Calu3 (cell line): ENCODE measurements at regions of chr1 and their contacts with region 1.

Region 1: GRCh38 chr1:16055613-16056520 is 12.3 kb downstream of the CLCNKB start:
- DNase-seq: peak; percentile 88
- H3K4me3 Mint-ChIP-seq: no peak overlapping the region
- H3K27ac Mint-ChIP-seq: no peak overlapping the region
- H3K4me1 Mint-ChIP-seq: no peaks in the 10 kb centered on the region
- H3K27me3 Mint-ChIP-seq: peaks cover 18% of the 10 kb centered on the region
- CTCF ChIP-seq: no peak

Region 2: DNA sequence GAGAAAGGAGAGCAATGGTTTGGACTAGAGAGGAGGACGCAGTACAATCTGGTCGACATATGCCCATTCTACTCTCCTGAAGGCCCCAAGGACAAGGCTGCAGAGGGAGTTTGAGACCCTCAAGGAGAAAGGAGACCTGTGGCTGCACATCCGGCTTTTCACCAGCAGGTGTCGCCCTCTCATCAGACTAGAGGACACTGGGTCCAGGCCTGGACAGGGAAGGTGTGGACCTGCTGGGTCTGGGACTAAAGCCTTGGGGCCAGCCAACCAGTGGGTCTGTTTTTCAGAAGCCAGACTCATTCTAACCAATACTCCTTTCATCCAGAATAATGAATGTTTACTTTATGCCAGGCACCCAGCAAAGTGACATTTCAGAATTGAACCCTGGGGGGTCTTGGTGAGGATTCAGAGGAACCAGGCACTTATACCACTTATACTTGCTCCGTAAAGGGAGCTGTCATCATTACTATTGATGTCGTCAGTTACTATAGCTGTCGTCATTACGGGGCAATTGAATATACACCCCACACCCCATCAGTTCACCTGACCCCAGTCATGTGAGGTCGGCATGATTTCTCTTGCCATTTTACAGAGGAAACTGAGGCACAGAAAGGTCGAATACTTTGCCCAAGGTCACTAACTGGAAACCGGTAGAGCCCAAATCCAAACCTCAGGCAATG is 46.7 kb before region 1 on chr1:
- CTCF ChIA-PET with region 1: no interaction called
- intact Hi-C with region 1: loop called (anchors 1 kb)
- DNase-seq: peak; percentile 79
- H3K4me3 Mint-ChIP-seq: no peak overlapping the region
- H3K27ac Mint-ChIP-seq: no peak overlapping the region
- H3K4me1 Mint-ChIP-seq: peaks cover 8% of the 10 kb centered on the region
- H3K27me3 Mint-ChIP-seq: no peaks in the 10 kb centered on the region
- CTCF ChIP-seq: peak; percentile 82

Region 3: DNA sequence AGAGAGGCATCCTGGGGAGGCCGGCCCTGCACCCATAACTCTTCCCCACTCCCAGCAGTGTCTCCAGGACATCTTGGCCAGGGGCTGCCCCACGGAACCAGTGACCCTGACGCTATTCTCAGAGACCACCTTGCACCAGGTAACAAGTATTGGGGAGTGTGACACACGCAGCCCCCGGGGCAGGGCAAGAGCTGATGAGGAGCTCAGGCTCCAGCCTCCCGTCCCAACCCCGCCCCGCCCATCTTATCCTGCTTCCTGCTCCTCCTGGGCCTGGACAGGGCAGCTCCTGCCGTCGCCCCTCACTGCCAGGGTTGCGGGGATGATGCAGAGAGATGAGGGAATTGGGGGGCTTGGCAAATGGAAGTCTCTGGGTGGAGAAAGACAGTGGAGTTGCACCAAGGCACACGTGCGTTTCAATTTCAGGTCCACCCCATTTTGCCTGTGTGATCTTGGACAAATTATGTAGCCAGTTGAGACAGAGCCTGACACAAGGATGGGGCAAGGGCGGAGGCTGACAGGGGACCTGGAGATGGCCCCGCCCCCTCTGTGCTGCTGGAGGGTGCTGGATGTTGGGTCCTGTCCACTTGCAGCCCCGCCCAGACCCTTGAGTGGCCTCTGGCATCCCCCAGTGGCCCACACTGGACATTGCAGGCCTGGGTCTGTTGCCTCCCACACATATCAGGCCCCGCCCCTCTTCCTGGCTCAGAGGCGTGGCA is 23.3 kb before region 1 on chr1:
- CTCF ChIA-PET with region 1: interaction called, 5 read pairs
- intact Hi-C with region 1: loop called (anchors 2 kb)
- DNase-seq: peak; percentile 85
- H3K4me3 Mint-ChIP-seq: no peak overlapping the region
- H3K27ac Mint-ChIP-seq: no peak overlapping the region
- H3K4me1 Mint-ChIP-seq: no peaks in the 10 kb centered on the region
- H3K27me3 Mint-ChIP-seq: peaks cover 43% of the 10 kb centered on the region
- CTCF ChIP-seq: peak; percentile 88

Region 4: GRCh38 chr1:16318555-16318954 is 262.7 kb after region 1 on chr1:
- CTCF ChIA-PET with region 1: no interaction called
- intact Hi-C with region 1: no loop called
- DNase-seq: no peak
- H3K4me3 Mint-ChIP-seq: no peak overlapping the region
- H3K27ac Mint-ChIP-seq: no peak overlapping the region
- H3K4me1 Mint-ChIP-seq: no peaks in the 10 kb centered on the region
- H3K27me3 Mint-ChIP-seq: no peaks in the 10 kb centered on the region
- CTCF ChIP-seq: no peak